Sciatic nerve (tissue), 2 donors: ENCODE measurements at regions of chr16 and their contacts with region 1.

Region 1: DNA sequence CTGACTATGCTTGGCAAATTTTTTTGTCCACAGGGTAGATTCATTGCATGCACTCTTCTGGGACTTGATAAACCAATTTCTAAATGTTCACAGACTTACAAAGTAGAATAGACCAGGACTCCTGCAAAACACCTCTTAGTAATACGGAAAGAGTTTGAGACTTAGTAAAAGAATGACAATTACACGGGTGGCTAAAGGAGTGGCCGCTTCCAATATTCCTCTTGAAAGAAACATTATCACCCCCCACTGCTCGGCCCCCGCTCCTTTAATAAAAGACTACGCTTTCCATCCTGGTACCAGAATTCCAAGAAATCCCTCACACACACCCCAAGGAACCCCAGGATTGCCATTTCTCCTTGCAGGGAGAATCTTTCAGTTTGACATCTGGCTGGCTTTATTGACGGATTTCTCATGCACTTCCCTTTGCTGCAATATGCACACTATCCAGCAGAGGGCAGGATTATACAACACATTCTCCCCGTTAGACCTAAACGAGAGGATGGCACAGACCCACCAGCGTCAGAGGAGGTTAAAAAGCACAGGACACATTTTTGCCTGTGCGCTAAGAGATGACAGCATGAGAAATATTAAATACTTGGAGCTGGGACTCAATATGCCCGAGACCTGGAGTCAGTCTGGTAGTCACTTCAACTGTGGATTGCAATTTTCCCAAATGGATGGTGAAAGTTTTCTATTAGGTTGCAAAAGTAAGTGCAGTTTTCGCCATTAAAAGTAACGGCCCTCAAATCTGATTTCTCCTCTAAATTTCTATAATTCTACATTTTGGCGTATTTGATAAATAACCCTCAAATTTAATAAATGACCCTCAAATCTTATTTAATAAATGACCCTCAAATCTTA is 46.6 kb upstream of the NUDT7 start:
- DNase-seq: peak; percentile 73
- ATAC-seq: peak; percentile 86

Region 2: GRCh38 chr16:77971306-77972271 is 295.9 kb after region 1 on chr16:
- intact Hi-C with region 1: loop called (anchors 5 kb)
- DNase-seq: peak; percentile 92
- ATAC-seq: peak; percentile 87